SK-N-SH (cell line): ENCODE measurements at regions of chr6 and their contacts with region 1.

Region 1: GRCh38 chr6:17098538-17098937 is 3.3 kb upstream of the STMND1 start:
- DNase-seq: no peak
- H3K4me3 ChIP-seq: no peak overlapping the region
- H3K27ac ChIP-seq: no peak overlapping the region
- H3K4me1 ChIP-seq: peaks cover 0 to 5% of the 10 kb centered on the region in 2 experiments; a peak in 1 of 4 replicates
- H3K27me3 ChIP-seq: peaks cover 17% of the 10 kb centered on the region; the same call in 1 of the 2 replicates
- CTCF ChIP-seq: no peak
- EP300 ChIP-seq: no peak
- RAD21 ChIP-seq: no peak

Region 2: GRCh38 chr6:17086469-17086868 is 12.1 kb before region 1 on chr6:
- CTCF ChIA-PET with region 1: interaction called, 12 read pairs
- POLR2A ChIA-PET with region 1: no interaction called
- DNase-seq: peak; percentile 66
- H3K4me3 ChIP-seq: no peak overlapping the region; a peak in 1 of 4 replicates
- H3K27ac ChIP-seq: peak overlapping the region in 1 of 2 experiments; percentile 45; a peak in 1 of 4 replicates
- H3K4me1 ChIP-seq: peaks cover 0 to 9% of the 10 kb centered on the region in 2 experiments; a peak in 1 of 4 replicates
- H3K27me3 ChIP-seq: no peaks in the 10 kb centered on the region
- CTCF ChIP-seq: peak; percentile 83
- EP300 ChIP-seq: no peak
- RAD21 ChIP-seq: peak; percentile 81